Heart left ventricle (tissue), 16 donors: ENCODE measurements at regions of chr5 and their contacts with region 1.

Region 1: GRCh38 chr5:55534436-55535198 is at the start of gene PLPP1:
- DNase-seq: peak; percentile 95
- ATAC-seq: peak; percentile 93 to 96 (median 95)
- H3K4me3 ChIP-seq: peak within 1 kb of the TSS; percentile 58 to 99 (median 88)
- H3K27ac ChIP-seq: peak within 1 kb of the TSS; percentile 89 to 99 (median 96)
- H3K4me1 ChIP-seq: peaks cover 0 to 49% (median 34%) of the 10 kb centered on the region in 12 donors
- H3K27me3 ChIP-seq: no peaks in the 10 kb centered on the region
- CTCF ChIP-seq: peak in 2 of 12 donors; percentile 16 to 17
- POLR2A ChIP-seq: peak in 1 of 2 donors; percentile 97
- total RNA-seq, gene PLPP1: 65.0 to 223 (median 81.5) TPM

Region 2: GRCh38 chr5:54852007-54852406 is 682.6 kb before region 1 on chr5:
- intact Hi-C with region 1: no loop called
- DNase-seq: no peak
- ATAC-seq: no peak
- H3K4me3 ChIP-seq: no peak overlapping the region
- H3K27ac ChIP-seq: no peak overlapping the region
- H3K4me1 ChIP-seq: no peaks in the 10 kb centered on the region
- H3K27me3 ChIP-seq: no peaks in the 10 kb centered on the region
- CTCF ChIP-seq: no peak
- POLR2A ChIP-seq: no peak

Region 3: DNA sequence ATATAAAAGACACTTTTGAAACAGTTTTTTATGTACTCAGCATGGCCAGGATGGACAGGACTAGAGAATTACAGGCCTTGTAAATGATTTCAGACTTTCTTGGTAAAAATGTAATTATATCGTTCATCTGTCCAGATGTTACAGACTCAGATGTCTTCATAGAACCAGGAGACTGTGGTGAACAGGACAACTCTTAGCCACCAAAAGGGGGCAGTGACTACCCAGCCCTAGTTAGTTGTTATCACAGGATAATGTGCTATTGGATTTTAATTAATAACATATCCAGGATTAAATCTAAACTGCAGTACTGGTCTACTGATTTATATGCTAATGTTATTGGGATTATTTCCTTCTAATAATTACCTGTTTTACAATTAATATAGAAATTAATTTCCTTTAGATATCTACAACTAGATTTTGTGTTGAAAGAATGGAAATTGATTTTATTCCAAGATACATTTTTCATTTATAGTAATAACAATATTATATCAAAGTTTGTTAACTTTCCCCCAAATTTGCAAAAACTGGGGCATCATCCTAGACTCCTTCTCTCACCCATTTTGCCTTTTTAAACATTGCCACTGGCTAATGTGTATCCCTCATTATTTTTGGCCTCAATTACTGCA is 127.4 kb before region 1 on chr5:
- intact Hi-C with region 1: loop called in 1 of 10 experiments (anchors 5 kb)
- DNase-seq: no peak
- ATAC-seq: peak; percentile 66 to 87 (median 77)
- H3K4me3 ChIP-seq: no peak overlapping the region
- H3K27ac ChIP-seq: no peak overlapping the region
- H3K4me1 ChIP-seq: peaks cover 0 to 13% (median 0%) of the 10 kb centered on the region in 12 donors
- H3K27me3 ChIP-seq: no peaks in the 10 kb centered on the region
- CTCF ChIP-seq: peak; percentile 61 to 90 (median 76)
- POLR2A ChIP-seq: no peak

Region 4: GRCh38 chr5:55429613-55430253 is 104.9 kb before region 1 on chr5:
- intact Hi-C with region 1: loop called in 3 of 10 experiments (anchors 5 to 10 kb)
- DNase-seq: peak in 1 of 5 donors; percentile 51
- ATAC-seq: peak in 3 of 4 donors; percentile 4 to 35 (median 19)
- H3K4me3 ChIP-seq: no peak overlapping the region
- H3K27ac ChIP-seq: peak overlapping the region in 2 of 12 donors; percentile 6 to 15
- H3K4me1 ChIP-seq: peaks cover 0 to 38% (median 24%) of the 10 kb centered on the region in 12 donors
- H3K27me3 ChIP-seq: no peaks in the 10 kb centered on the region
- CTCF ChIP-seq: no peak
- POLR2A ChIP-seq: no peak

Region 5: DNA sequence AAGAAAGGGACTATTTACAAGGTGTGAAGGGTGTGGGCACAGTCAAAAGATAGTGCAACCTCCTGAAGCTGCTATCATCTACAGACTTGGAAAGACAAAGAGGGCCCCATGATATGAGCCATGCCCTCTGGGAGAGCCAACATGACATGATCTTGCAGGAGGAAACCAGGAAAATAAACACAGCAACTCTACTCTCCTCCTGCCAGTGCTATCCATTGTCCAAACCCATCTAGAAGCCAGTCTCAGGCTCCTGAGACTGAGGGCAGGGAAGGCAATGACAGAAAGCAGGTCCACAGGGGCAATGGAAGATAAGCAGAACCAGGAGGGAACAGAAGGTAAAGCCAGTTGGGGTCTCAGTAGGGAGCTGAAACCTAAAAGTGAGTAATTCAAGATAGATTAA is 36.9 kb before region 1 on chr5:
- intact Hi-C with region 1: loop called in 1 of 10 experiments (anchors 1 kb)
- DNase-seq: no peak
- ATAC-seq: peak in 3 of 4 donors; percentile 25 to 55 (median 25)
- H3K4me3 ChIP-seq: no peak overlapping the region
- H3K27ac ChIP-seq: peak overlapping the region in 2 of 12 donors; percentile 27 to 50
- H3K4me1 ChIP-seq: peaks cover 0 to 63% (median 34%) of the 10 kb centered on the region in 12 donors
- H3K27me3 ChIP-seq: no peaks in the 10 kb centered on the region
- CTCF ChIP-seq: no peak
- POLR2A ChIP-seq: no peak

Region 6: GRCh38 chr5:55577353-55578060 is 42.9 kb after region 1 on chr5:
- intact Hi-C with region 1: loop called in 8 of 10 experiments (anchors 2 to 5 kb)
- DNase-seq: peak in 4 of 5 donors; percentile 77 to 84 (median 81)
- ATAC-seq: peak; percentile 91 to 94 (median 94)
- H3K4me3 ChIP-seq: no peak overlapping the region
- H3K27ac ChIP-seq: peak overlapping the region; percentile 71 to 90 (median 82)
- H3K4me1 ChIP-seq: peaks cover 6 to 53% (median 48%) of the 10 kb centered on the region in 12 donors
- H3K27me3 ChIP-seq: no peaks in the 10 kb centered on the region
- CTCF ChIP-seq: no peak
- POLR2A ChIP-seq: no peak

Region 7: DNA sequence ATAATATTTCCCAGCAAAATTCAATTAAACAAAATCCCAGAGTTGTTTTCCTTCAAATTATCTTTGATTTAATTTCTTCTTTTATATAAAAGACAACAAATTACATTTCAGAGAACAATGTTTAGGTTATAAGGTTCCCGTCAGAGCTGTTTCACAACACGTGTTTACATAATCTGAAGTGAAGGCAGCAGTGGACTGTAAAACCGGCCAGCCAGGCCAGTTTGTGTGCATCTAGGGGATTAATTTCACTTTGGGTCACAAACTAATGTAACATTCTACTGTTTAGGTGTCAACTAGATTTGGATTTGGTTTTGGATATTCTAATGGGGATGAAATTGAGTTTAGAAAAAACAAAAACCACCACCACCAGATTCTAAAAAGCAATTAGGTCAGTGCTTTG is 86.6 kb after region 1 on chr5:
- intact Hi-C with region 1: no loop called
- DNase-seq: no peak
- ATAC-seq: no peak
- H3K4me3 ChIP-seq: no peak overlapping the region
- H3K27ac ChIP-seq: peak overlapping the region in 2 of 12 donors; percentile 13 to 56
- H3K4me1 ChIP-seq: peaks cover 0 to 20% (median 9%) of the 10 kb centered on the region in 12 donors
- H3K27me3 ChIP-seq: no peaks in the 10 kb centered on the region
- CTCF ChIP-seq: no peak
- POLR2A ChIP-seq: no peak

Region 8: GRCh38 chr5:55636683-55637082 is 102.1 kb after region 1 on chr5:
- intact Hi-C with region 1: loop called in 2 of 10 experiments (anchors 5 to 10 kb)
- DNase-seq: peak in 4 of 5 donors; percentile 44 to 68 (median 50)
- ATAC-seq: peak in 3 of 4 donors; percentile 54 to 61 (median 54)
- H3K4me3 ChIP-seq: no peak overlapping the region
- H3K27ac ChIP-seq: peak overlapping the region; percentile 25 to 87 (median 75)
- H3K4me1 ChIP-seq: peaks cover 7 to 53% (median 42%) of the 10 kb centered on the region in 12 donors
- H3K27me3 ChIP-seq: no peaks in the 10 kb centered on the region
- CTCF ChIP-seq: no peak
- POLR2A ChIP-seq: no peak

Region 9: DNA sequence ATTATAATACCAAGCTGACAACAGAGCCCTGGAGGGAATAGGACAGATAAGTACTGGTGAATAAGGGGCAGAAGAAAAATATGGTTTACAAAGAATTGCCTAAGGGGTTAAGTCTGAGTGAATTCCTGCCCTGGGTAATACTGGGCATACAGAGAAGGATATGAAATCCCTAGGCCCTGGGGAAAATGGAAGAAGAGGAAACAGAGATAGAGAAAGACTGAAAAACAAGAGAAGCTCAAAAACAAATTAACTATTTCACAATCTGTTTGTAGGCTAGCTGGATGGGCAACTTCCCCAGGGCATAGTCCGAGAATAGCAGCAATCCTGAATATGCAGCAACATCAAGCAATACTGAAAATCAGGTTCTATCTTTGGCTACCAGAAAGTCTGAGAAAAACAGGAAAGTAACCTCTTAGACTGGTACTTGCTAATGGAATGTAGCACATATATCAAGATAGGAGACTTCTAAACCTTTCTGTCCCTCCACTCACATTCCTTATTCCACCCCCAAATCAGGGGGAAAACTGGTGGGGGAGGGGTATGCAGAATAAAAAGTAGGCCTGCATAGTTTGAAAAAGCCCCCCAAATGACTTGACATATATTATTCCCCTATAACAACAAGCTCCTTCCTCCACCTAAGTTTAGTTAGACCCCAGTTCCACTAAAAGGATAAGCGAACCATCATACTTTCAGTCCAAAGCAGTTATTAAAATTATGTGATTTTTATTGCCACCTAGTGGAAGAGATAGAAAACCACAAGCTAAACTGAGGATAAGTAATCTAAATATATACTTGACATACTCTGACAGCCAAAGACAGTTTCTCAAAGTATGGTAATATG is 156.9 kb after region 1 on chr5:
- intact Hi-C with region 1: loop called in 6 of 10 experiments (anchors 1 to 10 kb)
- DNase-seq: no peak
- ATAC-seq: peak; percentile 34 to 73 (median 56)
- H3K4me3 ChIP-seq: peak overlapping the region in 3 of 12 donors; percentile 3 to 36 (median 17)
- H3K27ac ChIP-seq: peak overlapping the region in 8 of 12 donors; percentile 8 to 64 (median 34)
- H3K4me1 ChIP-seq: peaks cover 5 to 33% (median 19%) of the 10 kb centered on the region in 12 donors
- H3K27me3 ChIP-seq: no peaks in the 10 kb centered on the region
- CTCF ChIP-seq: peak; percentile 55 to 80 (median 74)
- POLR2A ChIP-seq: no peak

Region 10: DNA sequence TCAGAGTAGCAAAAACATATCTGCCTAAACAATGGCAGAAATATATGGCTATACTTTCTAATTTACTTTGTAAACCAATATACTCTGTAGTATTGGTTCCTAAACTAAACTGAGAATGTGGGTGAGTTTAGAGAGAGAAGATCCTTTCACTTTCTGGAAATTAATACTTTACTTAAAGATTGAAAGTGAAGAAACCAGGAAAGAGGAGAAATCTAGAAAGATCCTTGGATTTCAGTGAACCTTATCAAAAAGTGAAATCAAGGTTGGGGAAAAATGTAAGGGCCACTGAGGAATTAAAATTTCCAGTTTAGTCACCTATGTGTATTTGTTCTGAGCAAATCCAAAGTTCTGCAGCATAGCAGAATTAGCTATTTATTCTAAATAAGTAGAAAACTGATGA is 171.6 kb after region 1 on chr5:
- intact Hi-C with region 1: no loop called
- DNase-seq: no peak
- ATAC-seq: no peak
- H3K4me3 ChIP-seq: no peak overlapping the region
- H3K27ac ChIP-seq: no peak overlapping the region
- H3K4me1 ChIP-seq: peaks cover 0 to 11% (median 3%) of the 10 kb centered on the region in 12 donors
- H3K27me3 ChIP-seq: no peaks in the 10 kb centered on the region
- CTCF ChIP-seq: no peak
- POLR2A ChIP-seq: no peak